ENCODE measurements at regions of chr19 and their contacts with region 1.

Region 1: GRCh38 chr19:18588611-18589379 is at the start of gene REX1BD:
- DNase-seq: peak; percentile 89
- H3K4me3 ChIP-seq: peak within 1 kb of the TSS; percentile 83 to 89
- H3K27ac ChIP-seq: peak within 1 kb of the TSS; percentile 69 to 94
- H3K4me1 ChIP-seq: peaks cover 6 to 22% of the 10 kb centered on the region in 2 experiments; a peak in 1 of 4 replicates
- H3K27me3 ChIP-seq: no peaks in the 10 kb centered on the region
- CTCF ChIP-seq: peak; percentile 86
- EP300 ChIP-seq: no peak
- RAD21 ChIP-seq: peak; percentile 5; the same call in 1 of the 2 replicates
- polyA plus RNA-seq, gene REX1BD: 109 and 159 TPM in 2 replicates

Region 2: GRCh38 chr19:18457483-18458331 is 131.1 kb before region 1 on chr19:
- CTCF ChIA-PET with region 1: interaction called, 10 read pairs
- POLR2A ChIA-PET with region 1: no interaction called
- DNase-seq: no peak
- H3K4me3 ChIP-seq: no peak overlapping the region
- H3K27ac ChIP-seq: no peak overlapping the region
- H3K4me1 ChIP-seq: peaks cover 9 to 15% of the 10 kb centered on the region in 2 experiments; a peak in 3 of 4 replicates
- H3K27me3 ChIP-seq: no peaks in the 10 kb centered on the region
- CTCF ChIP-seq: no peak
- EP300 ChIP-seq: no peak
- RAD21 ChIP-seq: no peak

Region 3: GRCh38 chr19:18488838-18489626 is 99.8 kb before region 1 on chr19:
- CTCF ChIA-PET with region 1: interaction called, 22 read pairs
- POLR2A ChIA-PET with region 1: no interaction called
- DNase-seq: peak; percentile 78
- H3K4me3 ChIP-seq: no peak overlapping the region
- H3K27ac ChIP-seq: no peak overlapping the region
- H3K4me1 ChIP-seq: peaks cover 14 to 51% of the 10 kb centered on the region in 2 experiments; a peak in 2 of 4 replicates
- H3K27me3 ChIP-seq: no peaks in the 10 kb centered on the region
- CTCF ChIP-seq: peak; percentile 26
- EP300 ChIP-seq: no peak
- RAD21 ChIP-seq: peak; percentile 65

Region 4: GRCh38 chr19:18500799-18501198 is 88.0 kb before region 1 on chr19:
- CTCF ChIA-PET with region 1: no interaction called
- POLR2A ChIA-PET with region 1: no interaction called
- DNase-seq: no peak
- H3K4me3 ChIP-seq: no peak overlapping the region
- H3K27ac ChIP-seq: no peak overlapping the region
- H3K4me1 ChIP-seq: peaks cover 10 to 58% of the 10 kb centered on the region in 2 experiments; a peak in 2 of 4 replicates
- H3K27me3 ChIP-seq: no peaks in the 10 kb centered on the region
- CTCF ChIP-seq: no peak
- EP300 ChIP-seq: no peak
- RAD21 ChIP-seq: no peak

Region 5: GRCh38 chr19:18571564-18572300 is 17.1 kb before region 1 on chr19 and contains the start of gene UBA52:
- CTCF ChIA-PET with region 1: interaction called, 45 read pairs
- POLR2A ChIA-PET with region 1: interaction called, 20 read pairs
- DNase-seq: peak; percentile 96
- H3K4me3 ChIP-seq: peak within 1 kb of the TSS; percentile 64 to 86
- H3K27ac ChIP-seq: peak within 1 kb of the TSS; percentile 74 to 76
- H3K4me1 ChIP-seq: peaks cover 10 to 16% of the 10 kb centered on the region in 2 experiments; a peak in 3 of 4 replicates
- H3K27me3 ChIP-seq: no peaks in the 10 kb centered on the region
- CTCF ChIP-seq: no peak
- EP300 ChIP-seq: no peak; a peak in 1 of 4 replicates
- RAD21 ChIP-seq: no peak
- polyA plus RNA-seq, gene UBA52: 2,690 and 3,026 TPM in 2 replicates

Region 6: DNA sequence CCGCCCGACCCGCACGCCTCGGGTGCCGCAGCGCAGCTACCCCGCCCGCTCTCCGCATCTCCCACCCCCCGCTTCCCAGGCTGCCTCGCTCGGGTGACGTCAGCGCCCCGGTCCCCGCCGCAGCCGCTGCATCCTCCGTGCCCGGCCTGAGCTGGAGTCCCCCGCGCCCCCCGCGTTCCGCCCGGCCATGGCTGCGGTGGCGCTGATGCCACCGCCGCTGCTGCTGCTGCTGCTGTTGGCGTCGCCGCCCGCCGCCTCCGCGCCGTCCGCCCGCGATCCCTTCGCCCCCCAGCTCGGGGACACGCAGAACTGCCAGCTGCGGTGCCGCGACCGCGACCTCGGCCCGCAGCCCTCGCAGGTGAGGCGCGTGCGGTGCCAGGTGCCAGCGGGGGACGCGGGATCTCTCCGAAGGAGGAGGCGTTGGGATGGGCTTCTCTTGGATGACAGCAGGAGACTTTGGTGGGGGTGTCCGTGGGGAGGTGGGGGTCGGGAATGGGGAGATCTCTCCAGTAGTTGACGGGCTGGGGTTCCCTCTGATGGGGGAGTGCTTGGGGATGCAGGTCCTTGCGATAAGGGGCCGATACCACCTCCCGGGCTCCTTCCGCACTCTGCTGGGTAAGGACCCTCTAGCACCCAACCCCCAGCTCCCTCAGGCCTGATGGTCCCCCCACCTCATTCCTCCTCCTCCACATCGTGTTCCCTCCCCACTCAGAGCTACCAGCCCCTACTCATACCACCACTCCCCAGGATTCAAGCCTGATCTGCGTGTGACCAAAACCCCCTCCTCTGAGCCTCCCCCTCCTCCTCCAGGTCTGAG is 24.2 kb after region 1 on chr19 and contains the start of gene TMEM59L:
- CTCF ChIA-PET with region 1: interaction called, 13 read pairs
- POLR2A ChIA-PET with region 1: interaction called, 9 read pairs
- DNase-seq: peak; percentile 95
- H3K4me3 ChIP-seq: peak within 1 kb of the TSS; percentile 73 to 78
- H3K27ac ChIP-seq: peak within 1 kb of the TSS in 1 of 2 experiments; percentile 28; a peak in 1 of 4 replicates
- H3K4me1 ChIP-seq: peaks cover 15 to 19% of the 10 kb centered on the region in 2 experiments; a peak in 2 of 4 replicates
- H3K27me3 ChIP-seq: peaks cover 44% of the 10 kb centered on the region
- CTCF ChIP-seq: no peak
- EP300 ChIP-seq: no peak
- RAD21 ChIP-seq: no peak
- polyA plus RNA-seq, gene TMEM59L: 5.8 and 9.6 TPM in 2 replicates

Region 7: DNA sequence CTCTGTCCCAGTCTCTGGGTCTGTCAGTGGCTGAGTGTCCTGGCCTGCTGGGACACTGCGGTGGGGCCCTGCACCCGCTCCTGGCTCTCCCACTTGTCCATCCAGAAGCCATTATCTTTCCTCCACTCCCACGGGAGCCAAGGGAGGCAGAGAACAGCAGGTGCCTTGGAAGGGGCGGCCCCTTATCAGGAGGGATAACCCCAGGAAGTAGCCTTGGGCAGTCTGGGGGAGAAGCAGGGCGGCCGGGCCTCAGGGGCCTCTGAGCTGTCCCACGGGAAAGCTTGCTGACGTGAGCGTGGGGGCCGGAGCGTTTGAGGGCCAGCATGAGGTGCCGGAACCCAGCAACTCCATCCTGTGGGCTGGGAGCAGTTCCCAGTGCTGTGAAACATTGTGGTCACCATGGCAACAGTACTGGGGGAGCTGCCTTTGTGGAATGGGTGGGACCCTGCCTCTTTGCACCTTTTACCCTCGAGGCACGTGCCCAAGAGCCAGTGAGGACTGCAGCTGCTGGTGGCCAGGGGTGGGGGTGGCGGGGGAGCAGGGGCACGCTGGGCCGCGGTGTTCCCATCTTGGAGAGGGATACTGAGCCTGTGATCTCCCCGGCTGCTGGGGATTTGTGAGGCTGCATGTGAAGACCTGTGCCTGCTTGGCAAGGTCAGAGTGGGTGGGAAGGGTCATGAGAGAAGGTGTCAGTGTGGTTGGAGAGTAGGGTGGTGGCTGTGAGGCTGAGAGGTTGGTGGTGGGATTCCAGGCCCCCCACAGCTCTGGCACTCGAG is 69.0 kb after region 1 on chr19:
- CTCF ChIA-PET with region 1: no interaction called
- POLR2A ChIA-PET with region 1: no interaction called
- DNase-seq: peak; percentile 76
- H3K4me3 ChIP-seq: no peak overlapping the region
- H3K27ac ChIP-seq: no peak overlapping the region
- H3K4me1 ChIP-seq: peaks cover 13 to 27% of the 10 kb centered on the region in 2 experiments; a peak in 3 of 4 replicates
- H3K27me3 ChIP-seq: no peaks in the 10 kb centered on the region
- CTCF ChIP-seq: no peak
- EP300 ChIP-seq: no peak
- RAD21 ChIP-seq: no peak

Region 8: DNA sequence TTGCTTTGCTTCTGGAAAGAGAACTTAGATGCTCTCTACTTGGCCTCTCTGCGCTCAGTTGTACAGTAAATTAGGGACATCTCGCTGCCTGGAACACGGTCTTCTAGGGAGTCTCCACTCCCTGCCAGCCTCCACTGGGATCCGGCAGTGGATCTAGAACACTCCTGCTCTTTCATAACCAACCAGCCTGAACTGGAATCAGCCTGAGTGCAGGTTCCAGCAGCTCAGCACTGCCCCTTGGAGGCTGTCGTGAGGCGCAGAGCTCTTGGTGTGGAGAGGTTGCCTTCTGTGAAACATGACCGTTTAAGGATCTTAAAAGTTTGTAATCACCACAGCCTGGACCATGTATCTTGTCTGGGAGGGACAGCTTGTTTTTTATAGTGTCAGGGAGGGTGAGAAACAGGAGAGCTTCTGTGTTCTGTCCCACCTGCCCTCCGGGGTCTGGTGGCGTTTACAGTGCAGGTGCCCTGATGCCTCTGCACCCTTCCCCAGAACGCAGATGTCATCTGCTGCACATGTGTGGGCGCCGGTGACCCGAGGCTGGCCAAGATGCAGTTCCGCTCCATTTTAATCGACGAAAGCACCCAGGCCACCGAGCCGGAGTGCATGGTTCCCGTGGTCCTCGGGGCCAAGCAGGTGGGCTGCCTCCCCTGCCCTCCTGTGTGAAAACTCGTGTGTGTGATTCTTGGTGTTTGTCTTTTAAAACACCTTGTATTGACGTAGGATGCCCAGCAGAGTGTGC is 267.8 kb after region 1 on chr19:
- CTCF ChIA-PET with region 1: interaction called, 234 read pairs
- POLR2A ChIA-PET with region 1: no interaction called
- DNase-seq: peak; percentile 63
- H3K4me3 ChIP-seq: no peak overlapping the region
- H3K27ac ChIP-seq: no peak overlapping the region; a peak in 1 of 4 replicates
- H3K4me1 ChIP-seq: peaks cover 0 to 3% of the 10 kb centered on the region in 2 experiments; a peak in 1 of 4 replicates
- H3K27me3 ChIP-seq: no peaks in the 10 kb centered on the region
- CTCF ChIP-seq: peak; percentile 47
- EP300 ChIP-seq: no peak
- RAD21 ChIP-seq: peak; percentile 68

Region 9: DNA sequence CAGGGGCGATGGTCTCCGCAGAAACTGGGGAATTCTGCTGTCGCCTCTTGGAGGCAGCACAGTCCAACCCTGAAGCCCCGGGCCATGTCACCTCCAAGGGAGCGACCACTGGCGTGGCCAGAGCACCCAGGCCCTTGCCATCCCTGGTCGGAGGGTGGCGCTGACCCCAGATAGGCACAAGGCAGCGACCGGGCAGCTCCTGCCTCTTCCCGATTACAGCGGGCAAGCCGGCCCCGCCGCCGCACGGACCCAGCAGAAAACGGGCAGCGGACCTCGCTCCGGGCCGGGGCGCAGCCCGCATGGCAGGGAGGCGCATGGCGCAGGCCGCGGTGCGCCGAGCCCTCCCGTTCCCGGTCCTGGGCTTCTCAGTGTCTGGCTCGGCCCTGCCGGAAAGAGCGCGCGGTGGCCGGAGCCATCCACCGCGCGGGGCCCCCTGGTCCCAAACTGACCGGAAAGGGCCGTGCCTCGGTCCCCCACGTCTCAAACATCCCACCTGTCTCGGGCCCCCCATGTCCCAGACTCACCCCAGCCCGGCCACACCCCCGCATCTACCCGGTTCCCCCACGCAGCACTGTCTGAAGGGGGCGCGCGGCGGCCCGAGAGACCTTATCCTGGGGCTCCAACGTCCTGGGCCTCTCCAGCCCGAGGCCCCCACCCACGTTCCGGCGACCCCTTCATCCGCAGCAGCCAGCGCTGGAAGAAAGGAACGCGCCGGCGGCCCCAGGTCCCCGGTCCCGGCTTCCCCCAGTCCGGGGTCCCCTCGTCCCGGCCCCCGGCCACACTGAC is 306.4 kb after region 1 on chr19:
- CTCF ChIA-PET with region 1: interaction called, 15 read pairs
- POLR2A ChIA-PET with region 1: no interaction called
- DNase-seq: peak; percentile 95
- H3K4me3 ChIP-seq: peak overlapping the region; percentile 61 to 72
- H3K27ac ChIP-seq: peak overlapping the region in 1 of 2 experiments; percentile 65; a peak in 1 of 4 replicates
- H3K4me1 ChIP-seq: peaks cover 0 to 24% of the 10 kb centered on the region in 2 experiments; a peak in 1 of 4 replicates
- H3K27me3 ChIP-seq: no peaks in the 10 kb centered on the region
- CTCF ChIP-seq: peak; percentile 53
- EP300 ChIP-seq: no peak
- RAD21 ChIP-seq: peak; percentile 71

Measured in SK-N-SH (cell line).